ENCODE measurements at regions of chr10 and their contacts with region 1.

Region 1: GRCh38 chr10:73644015-73644743 is 2.9 kb upstream of the MYOZ1 start:
- DNase-seq: peak; percentile 70
- H3K4me3 ChIP-seq: no peak overlapping the region
- H3K27ac ChIP-seq: no peak overlapping the region
- H3K4me1 ChIP-seq: peaks cover 2% of the 10 kb centered on the region
- H3K27me3 ChIP-seq: peaks cover 7 to 17% of the 10 kb centered on the region in 2 experiments
- CTCF ChIP-seq: peak; percentile 72 to 77
- POLR2A ChIP-seq: no peak

Region 2: GRCh38 chr10:73529089-73529832 is 114.9 kb before region 1 on chr10:
- CTCF ChIA-PET with region 1: interaction called, 127 read pairs
- POLR2A ChIA-PET with region 1: no interaction called
- dilution Hi-C with region 1: no loop called
- intact Hi-C with region 1: loop called (anchors 1 kb)
- DNase-seq: peak; percentile 66
- H3K4me3 ChIP-seq: no peak overlapping the region
- H3K27ac ChIP-seq: no peak overlapping the region
- H3K4me1 ChIP-seq: no peaks in the 10 kb centered on the region
- H3K27me3 ChIP-seq: no peaks in the 10 kb centered on the region
- CTCF ChIP-seq: peak; percentile 63 to 65
- POLR2A ChIP-seq: no peak

Region 3: GRCh38 chr10:73803680-73804286 is 159.6 kb after region 1 on chr10:
- CTCF ChIA-PET with region 1: no interaction called
- POLR2A ChIA-PET with region 1: no interaction called
- dilution Hi-C with region 1: no loop called
- intact Hi-C with region 1: no loop called
- DNase-seq: no peak
- H3K4me3 ChIP-seq: no peak overlapping the region
- H3K27ac ChIP-seq: no peak overlapping the region
- H3K4me1 ChIP-seq: no peaks in the 10 kb centered on the region
- H3K27me3 ChIP-seq: no peaks in the 10 kb centered on the region
- CTCF ChIP-seq: no peak
- POLR2A ChIP-seq: no peak

Region 4: GRCh38 chr10:74189999-74190421 is 545.8 kb after region 1 on chr10:
- CTCF ChIA-PET with region 1: no interaction called
- POLR2A ChIA-PET with region 1: no interaction called
- dilution Hi-C with region 1: no loop called
- intact Hi-C with region 1: no loop called
- DNase-seq: peak; percentile 64
- H3K4me3 ChIP-seq: peak overlapping the region in 1 of 3 experiments; percentile 11
- H3K27ac ChIP-seq: peak overlapping the region; percentile 25
- H3K4me1 ChIP-seq: peaks cover 13% of the 10 kb centered on the region
- H3K27me3 ChIP-seq: no peaks in the 10 kb centered on the region
- CTCF ChIP-seq: no peak
- POLR2A ChIP-seq: no peak